ENCODE measurements at regions of chr19 and their contacts with region 1.

Region 1: GRCh38 chr19:57288373-57288772 is 8.1 kb downstream of the ZNF460 start:
- DNase-seq: no peak
- ATAC-seq: no peak
- H3K4me3 ChIP-seq: no peak overlapping the region
- H3K27ac ChIP-seq: no peak overlapping the region
- H3K4me1 ChIP-seq: no peaks in the 10 kb centered on the region
- H3K27me3 ChIP-seq: no peaks in the 10 kb centered on the region
- CTCF ChIP-seq: no peak
- POLR2A ChIP-seq: no peak
- RAD21 ChIP-seq: no peak

Region 2: DNA sequence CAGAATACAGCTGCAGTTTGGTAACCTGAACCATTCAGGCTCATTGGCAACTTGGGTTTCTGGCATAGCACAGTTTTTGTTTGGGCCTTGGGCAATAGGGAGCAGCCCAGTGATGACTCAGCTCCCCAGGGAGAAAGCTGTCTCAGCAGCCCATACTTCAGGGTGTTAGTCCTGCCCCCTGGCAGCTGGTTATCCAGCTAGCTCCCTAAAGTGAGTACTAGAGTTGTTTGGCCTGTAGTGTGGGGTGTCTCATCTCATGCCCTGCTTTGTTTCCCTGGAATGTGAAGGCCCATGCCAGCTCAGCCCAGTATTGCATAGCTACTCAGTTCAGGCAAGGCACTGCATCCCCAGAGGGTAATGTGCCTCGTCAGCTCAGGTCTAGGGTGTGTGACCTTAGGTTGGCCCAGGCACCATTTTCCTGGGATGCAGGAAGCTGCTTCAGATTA is 13.7 kb after region 1 on chr19:
- CTCF ChIA-PET with region 1: interaction called, 4 read pairs
- POLR2A ChIA-PET with region 1: interaction called, 13 read pairs
- dilution Hi-C with region 1: no loop called
- in situ Hi-C with region 1: no loop called
- intact Hi-C with region 1: no loop called
- DNase-seq: peak; percentile 95
- ATAC-seq: peak; percentile 97
- H3K4me3 ChIP-seq: no peak overlapping the region
- H3K27ac ChIP-seq: peak overlapping the region; percentile 52; the same call in 1 of the 2 replicates
- H3K4me1 ChIP-seq: peaks cover 9% of the 10 kb centered on the region
- H3K27me3 ChIP-seq: no peaks in the 10 kb centered on the region
- CTCF ChIP-seq: 0 out of 2 replicates have a peak, but pooled peaks have one; percentile 11
- POLR2A ChIP-seq: no peak
- RAD21 ChIP-seq: no peak; the same call in 1 of the 2 replicates

Region 3: GRCh38 chr19:58117841-58118575 is 829.6 kb after region 1 on chr19:
- CTCF ChIA-PET with region 1: no interaction called
- POLR2A ChIA-PET with region 1: no interaction called
- dilution Hi-C with region 1: no loop called
- in situ Hi-C with region 1: no loop called
- intact Hi-C with region 1: no loop called
- DNase-seq: no peak
- ATAC-seq: no peak
- H3K4me3 ChIP-seq: no peak overlapping the region
- H3K27ac ChIP-seq: no peak overlapping the region
- H3K4me1 ChIP-seq: no peaks in the 10 kb centered on the region
- H3K27me3 ChIP-seq: no peaks in the 10 kb centered on the region
- CTCF ChIP-seq: no peak
- POLR2A ChIP-seq: no peak
- RAD21 ChIP-seq: no peak

Measured in IMR-90 (cell line).